Activated naive CD4-positive, alpha-beta T cell treated with anti-CD3 and anti-CD28 coated beads for 36 hours (primary cell): ENCODE measurements at regions of chr17 and their contacts with region 1.

Region 1: DNA sequence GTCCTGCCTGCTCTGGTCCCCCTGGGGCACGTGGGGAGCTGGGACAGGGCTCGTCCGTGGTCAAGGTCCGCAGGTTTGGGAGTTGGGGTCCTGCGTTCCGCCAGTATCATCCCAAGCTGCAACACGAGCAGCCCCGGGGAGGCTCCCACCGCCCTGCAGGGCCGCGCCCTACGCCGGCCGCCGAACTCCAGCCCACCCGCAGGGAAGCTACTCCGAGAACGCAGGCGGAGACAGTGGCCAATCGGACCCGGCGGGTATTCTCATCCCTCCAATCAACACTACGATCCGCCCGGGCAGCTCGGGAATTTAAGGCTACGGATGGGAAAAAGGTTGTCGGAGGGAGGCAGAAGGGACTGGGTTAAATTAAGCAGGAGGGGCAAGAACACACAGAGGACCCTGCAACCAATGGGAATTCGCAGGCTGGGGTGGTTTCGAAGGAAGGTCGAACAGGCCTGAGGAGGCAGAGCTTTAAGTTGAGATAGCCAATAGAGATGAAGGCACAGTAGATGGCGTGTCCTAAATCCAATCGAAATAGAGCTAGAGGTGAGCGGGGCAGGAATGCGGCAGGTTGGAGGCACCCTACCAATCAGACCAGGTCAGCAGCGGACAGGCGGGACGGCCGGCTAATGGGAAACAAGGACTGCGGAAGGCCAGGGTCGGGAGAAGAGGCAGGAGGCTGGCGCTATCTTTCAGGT is 626 bp downstream of the SPAG7 start:
- DNase-seq: peak; percentile 97
- H3K4me3 Mint-ChIP-seq: no peak overlapping the region
- H3K27ac Mint-ChIP-seq: no peak overlapping the region
- H3K4me1 Mint-ChIP-seq: peaks cover 39% of the 10 kb centered on the region
- H3K27me3 Mint-ChIP-seq: no peaks in the 10 kb centered on the region

Region 2: GRCh38 chr17:4908301-4908700 is 58.7 kb before region 1 on chr17:
- CTCF ChIA-PET with region 1: interaction called, 8 read pairs
- intact Hi-C with region 1: loop called (anchors 1 kb)
- DNase-seq: peak; percentile 34
- H3K4me3 Mint-ChIP-seq: no peak overlapping the region
- H3K27ac Mint-ChIP-seq: no peak overlapping the region
- H3K4me1 Mint-ChIP-seq: peaks cover 4% of the 10 kb centered on the region
- H3K27me3 Mint-ChIP-seq: no peaks in the 10 kb centered on the region

Region 3: DNA sequence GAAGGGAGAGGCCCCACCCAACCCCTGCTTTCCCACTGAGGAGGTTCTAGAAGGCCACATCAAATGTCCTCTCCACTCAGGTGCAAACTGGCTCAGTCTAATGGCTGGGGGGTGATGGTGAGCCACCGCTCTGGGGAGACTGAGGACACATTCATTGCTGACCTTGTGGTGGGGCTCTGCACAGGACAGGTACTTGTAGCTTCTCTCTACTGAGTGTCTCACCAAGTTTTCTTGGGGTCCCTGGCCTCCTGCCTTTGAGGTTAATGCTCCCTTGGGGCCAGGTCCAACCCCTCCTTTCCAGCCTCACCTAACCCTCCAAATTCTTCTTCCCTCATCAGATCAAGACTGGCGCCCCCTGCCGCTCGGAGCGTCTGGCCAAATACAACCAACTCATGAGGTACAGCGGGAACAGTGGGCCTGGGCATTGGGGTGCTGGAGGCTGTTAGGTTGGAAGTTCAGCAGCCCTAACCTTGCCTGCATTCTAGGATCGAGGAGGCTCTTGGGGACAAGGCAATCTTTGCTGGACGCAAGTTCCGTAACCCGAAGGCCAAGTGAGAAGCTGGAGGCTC is 10.4 kb before region 1 on chr17:
- CTCF ChIA-PET with region 1: interaction called, 18 read pairs
- intact Hi-C with region 1: no loop called
- DNase-seq: peak; percentile 70
- H3K4me3 Mint-ChIP-seq: no peak overlapping the region
- H3K27ac Mint-ChIP-seq: no peak overlapping the region
- H3K4me1 Mint-ChIP-seq: peaks cover 7% of the 10 kb centered on the region
- H3K27me3 Mint-ChIP-seq: no peaks in the 10 kb centered on the region

Region 4: GRCh38 chr17:4986951-4987766 is 20.2 kb after region 1 on chr17 and contains the start of gene CAMTA2:
- CTCF ChIA-PET with region 1: interaction called, 5 read pairs
- intact Hi-C with region 1: loop called (anchors 1 kb)
- DNase-seq: peak; percentile 87
- H3K4me3 Mint-ChIP-seq: peak within 1 kb of the TSS; percentile 88
- H3K27ac Mint-ChIP-seq: peak within 1 kb of the TSS; percentile 92
- H3K4me1 Mint-ChIP-seq: peaks cover 29% of the 10 kb centered on the region
- H3K27me3 Mint-ChIP-seq: no peaks in the 10 kb centered on the region
- total RNA-seq, gene CAMTA2: 79.1 to 79.5 TPM

Region 5: DNA sequence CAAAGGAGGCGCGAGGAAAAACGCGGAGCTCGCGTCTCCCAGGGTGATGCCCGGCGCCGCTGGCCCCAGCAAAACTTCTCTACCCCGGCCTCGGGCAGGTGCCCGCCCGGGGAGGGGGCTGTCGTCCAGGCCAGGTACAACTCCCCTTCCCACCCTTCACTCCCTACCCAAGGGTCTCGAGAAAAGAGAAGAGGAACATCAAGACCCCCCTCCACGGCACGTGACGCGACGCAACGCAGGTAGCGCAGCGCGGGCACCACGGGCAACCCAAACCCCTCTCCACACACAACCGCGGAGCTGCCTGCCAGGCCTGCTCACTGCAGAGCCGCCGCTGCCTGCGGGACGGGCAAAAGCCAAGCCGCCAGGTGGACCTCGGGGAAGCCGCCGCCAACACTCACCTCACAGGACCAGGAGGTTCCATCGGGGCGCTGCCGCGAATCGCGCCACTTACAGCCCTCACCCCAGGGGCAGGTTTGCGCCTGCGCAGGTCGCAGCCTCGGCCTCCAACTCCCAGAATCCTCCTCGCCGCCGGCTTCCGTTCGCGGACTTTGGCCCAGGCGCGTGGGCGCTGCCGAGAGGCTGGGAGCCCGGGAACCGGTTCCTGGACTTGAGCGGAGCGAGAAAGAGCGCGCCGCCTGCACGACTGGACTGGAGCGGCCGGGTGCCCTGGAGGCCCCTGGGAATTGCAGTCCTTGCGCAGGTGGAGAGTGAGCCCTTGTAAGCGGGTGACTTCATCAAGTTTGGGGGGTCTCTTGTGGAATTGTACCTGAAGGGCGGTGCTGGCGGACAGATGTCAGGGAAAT is 144.6 kb after region 1 on chr17 and contains the start of gene ZNF232:
- CTCF ChIA-PET with region 1: no interaction called
- intact Hi-C with region 1: no loop called
- DNase-seq: peak; percentile 95
- H3K4me3 Mint-ChIP-seq: peak within 1 kb of the TSS; percentile 89
- H3K27ac Mint-ChIP-seq: peak within 1 kb of the TSS; percentile 81
- H3K4me1 Mint-ChIP-seq: peaks cover 27% of the 10 kb centered on the region
- H3K27me3 Mint-ChIP-seq: peaks cover 16% of the 10 kb centered on the region
- total RNA-seq, gene ZNF232: 9.1 to 9.5 TPM

Region 6: GRCh38 chr17:5438716-5439445 is 471.9 kb after region 1 on chr17 and contains the start of gene C1QBP:
- CTCF ChIA-PET with region 1: no interaction called
- intact Hi-C with region 1: loop called (anchors 5 kb)
- DNase-seq: peak; percentile 94
- H3K4me3 Mint-ChIP-seq: peak within 1 kb of the TSS; percentile 81
- H3K27ac Mint-ChIP-seq: peak within 1 kb of the TSS; percentile 88
- H3K4me1 Mint-ChIP-seq: peaks cover 41% of the 10 kb centered on the region
- H3K27me3 Mint-ChIP-seq: no peaks in the 10 kb centered on the region
- total RNA-seq, gene C1QBP: 435 to 460 TPM